PC-9 (cell line): ENCODE measurements at regions of chr2 and their contacts with region 1.

Region 1: GRCh38 chr2:226721541-226721940 is 78.1 kb downstream of the IRS1 start:
- DNase-seq: no peak
- H3K4me3 ChIP-seq: no peak overlapping the region
- H3K27ac ChIP-seq: no peak overlapping the region
- H3K4me1 ChIP-seq: no peaks in the 10 kb centered on the region
- H3K27me3 ChIP-seq: no peaks in the 10 kb centered on the region
- CTCF ChIP-seq: no peak

Region 2: GRCh38 chr2:226556050-226556449 is 165.5 kb before region 1 on chr2:
- CTCF ChIA-PET with region 1: no interaction called
- POLR2A ChIA-PET with region 1: interaction called, 23 read pairs
- intact Hi-C with region 1: no loop called
- DNase-seq: no peak
- H3K4me3 ChIP-seq: no peak overlapping the region
- H3K27ac ChIP-seq: no peak overlapping the region
- H3K4me1 ChIP-seq: no peaks in the 10 kb centered on the region
- H3K27me3 ChIP-seq: no peaks in the 10 kb centered on the region
- CTCF ChIP-seq: no peak

Region 3: DNA sequence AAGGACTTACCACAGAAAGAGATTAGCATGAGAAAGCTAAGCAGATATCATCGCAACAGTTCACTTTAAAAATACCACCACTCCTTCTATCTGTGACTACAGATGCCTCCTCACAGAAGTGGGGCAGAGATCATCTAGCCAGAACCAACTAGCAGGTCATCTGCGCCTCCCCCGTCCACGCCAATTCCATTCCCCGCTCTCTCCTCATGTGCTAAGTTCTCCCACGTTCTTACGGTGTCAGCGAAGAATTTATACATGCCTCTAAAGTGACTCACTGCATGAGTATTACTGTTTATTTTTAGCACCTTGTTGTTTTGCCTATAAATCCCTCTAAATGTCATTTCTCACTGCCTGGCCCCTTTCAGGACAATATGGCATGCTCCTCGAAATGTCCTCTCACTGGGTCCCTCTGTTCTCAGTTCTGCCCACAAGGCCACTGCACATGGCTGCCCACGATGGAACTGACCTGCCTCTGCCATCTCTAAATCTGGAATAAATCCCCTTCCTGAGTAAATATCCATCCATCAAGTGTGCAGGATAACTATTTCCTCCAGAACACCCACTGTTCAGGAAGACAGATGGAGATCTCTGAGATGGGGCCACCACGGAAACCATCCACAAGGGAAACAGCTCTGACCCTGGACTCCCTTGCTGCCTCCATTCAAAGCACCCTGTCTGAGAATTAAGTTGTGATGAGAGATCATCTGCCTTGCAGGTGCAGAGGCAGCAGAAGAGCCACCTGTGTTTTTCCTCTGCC is 59.6 kb before region 1 on chr2:
- CTCF ChIA-PET with region 1: no interaction called
- POLR2A ChIA-PET with region 1: no interaction called
- intact Hi-C with region 1: loop called (anchors 5 kb)
- DNase-seq: peak; percentile 81 to 95
- H3K4me3 ChIP-seq: peak overlapping the region; percentile 14; the same call in 1 of the 2 replicates
- H3K27ac ChIP-seq: peak overlapping the region; percentile 92
- H3K4me1 ChIP-seq: peaks cover 27% of the 10 kb centered on the region
- H3K27me3 ChIP-seq: no peaks in the 10 kb centered on the region
- CTCF ChIP-seq: no peak